Naive thymus-derived CD8-positive, alpha-beta T cell (primary cell): ENCODE measurements at regions of chr20 and their contacts with region 1.

Region 1: GRCh38 chr20:36645998-36646397 is at the start of gene SLA2:
- DNase-seq: peak; percentile 47 to 79 (median 70)
- ATAC-seq: peak; percentile 80 to 88
- H3K4me3 Mint-ChIP-seq: peak within 1 kb of the TSS; percentile 96 to 99 (median 98)
- H3K27ac Mint-ChIP-seq: peak within 1 kb of the TSS; percentile 90 to 99 (median 98)
- H3K4me1 Mint-ChIP-seq: peaks cover 31 to 60% (median 52%) of the 10 kb centered on the region in 4 donors
- H3K27me3 Mint-ChIP-seq: no peaks in the 10 kb centered on the region
- polyA plus RNA-seq, gene SLA2: 18.9 to 22.2 (median 19.1) TPM

Region 2: DNA sequence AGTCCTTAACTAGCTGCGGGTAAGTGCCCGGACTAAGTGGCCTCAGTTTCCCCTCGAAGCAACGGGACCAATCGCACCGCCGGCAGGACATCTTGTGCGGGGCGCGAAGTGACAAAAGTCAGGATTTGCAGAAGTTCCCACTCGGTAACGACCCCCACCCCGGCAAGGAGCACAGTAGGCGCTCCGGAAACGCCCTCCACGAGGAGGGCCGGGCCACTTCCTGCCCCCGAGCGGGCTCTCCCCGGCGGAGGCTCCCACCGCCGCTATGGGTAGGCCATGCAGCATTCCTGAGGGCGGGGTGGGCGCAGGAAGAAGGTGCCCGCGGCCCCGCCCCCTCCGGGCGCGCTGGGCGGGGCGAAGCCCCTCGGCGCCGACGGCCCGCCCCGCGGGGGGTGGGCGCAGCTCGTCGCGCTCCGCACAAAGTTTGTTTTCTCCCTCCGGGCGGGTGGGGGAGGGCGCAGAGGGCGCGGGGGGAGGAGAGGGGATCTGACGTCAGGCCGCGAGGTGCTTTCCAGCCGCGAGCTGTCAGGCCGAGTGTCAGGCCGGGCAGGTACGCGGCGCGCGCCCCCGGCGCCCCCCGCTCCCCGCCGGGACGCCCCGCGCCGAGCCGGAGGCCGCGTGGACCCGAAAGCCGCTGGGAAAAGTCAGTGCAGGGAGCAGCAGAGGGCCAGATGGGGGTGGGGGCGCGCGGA is 72.7 kb before region 1 on chr20 and contains the start of gene TGIF2:
- POLR2A ChIA-PET with region 1: interaction called, 19 read pairs
- DNase-seq: peak; percentile 86 to 96 (median 95)
- ATAC-seq: peak; percentile 71 to 75
- H3K4me3 Mint-ChIP-seq: peak within 1 kb of the TSS; percentile 85 to 98 (median 95)
- H3K27ac Mint-ChIP-seq: peak within 1 kb of the TSS; percentile 98 to 100 (median 99)
- H3K4me1 Mint-ChIP-seq: peaks cover 25 to 54% (median 39%) of the 10 kb centered on the region in 4 donors
- H3K27me3 Mint-ChIP-seq: no peaks in the 10 kb centered on the region
- polyA plus RNA-seq, gene TGIF2: 25.7 to 36.8 (median 30.8) TPM

Region 3: DNA sequence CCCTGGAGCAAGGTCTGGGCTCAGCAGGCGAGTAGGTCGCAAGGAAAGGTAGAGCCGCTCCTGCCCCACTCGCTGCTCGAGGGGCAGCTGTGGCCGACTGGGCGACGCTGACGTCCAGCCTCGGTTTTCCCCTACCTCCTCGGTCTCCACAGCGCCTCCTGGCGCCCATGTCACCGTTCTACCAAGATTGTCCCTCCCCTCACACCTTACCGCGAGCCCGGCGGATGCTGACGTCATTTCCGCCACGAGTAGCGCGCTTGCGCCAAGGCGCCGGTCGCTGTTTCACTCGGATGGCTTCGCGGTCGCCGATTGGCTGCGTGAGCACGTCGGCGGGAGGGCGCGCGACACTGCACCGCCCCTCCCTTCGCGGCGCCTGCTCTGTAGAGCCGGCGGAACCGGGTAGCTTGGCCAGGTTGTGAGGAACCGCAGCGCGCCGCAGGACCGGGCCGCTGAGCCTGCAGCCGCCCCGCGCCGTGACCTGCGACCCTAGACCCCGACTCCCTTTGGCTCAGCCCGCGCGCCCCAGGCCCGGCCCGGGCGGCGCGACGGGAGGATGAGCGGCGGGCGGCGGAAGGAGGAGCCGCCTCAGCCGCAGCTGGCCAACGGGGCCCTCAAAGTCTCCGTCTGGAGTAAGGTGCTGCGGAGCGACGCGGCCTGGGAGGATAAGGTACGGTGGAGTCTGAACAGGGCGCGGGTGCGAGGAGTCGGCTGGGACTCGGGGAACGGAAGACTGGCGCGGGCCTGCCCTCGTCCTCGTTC is 40.4 kb before region 1 on chr20 and contains the start of gene RAB5IF:
- POLR2A ChIA-PET with region 1: interaction called, 65 read pairs
- DNase-seq: peak; percentile 97 to 99 (median 99)
- ATAC-seq: peak; percentile 90 to 92
- H3K4me3 Mint-ChIP-seq: peak within 1 kb of the TSS; percentile 92 to 98 (median 96)
- H3K27ac Mint-ChIP-seq: peak within 1 kb of the TSS; percentile 92 to 99 (median 96)
- H3K4me1 Mint-ChIP-seq: peaks cover 15 to 45% (median 26%) of the 10 kb centered on the region in 4 donors
- H3K27me3 Mint-ChIP-seq: no peaks in the 10 kb centered on the region
- polyA plus RNA-seq, gene RAB5IF: 113 to 141 (median 138) TPM

Region 4: DNA sequence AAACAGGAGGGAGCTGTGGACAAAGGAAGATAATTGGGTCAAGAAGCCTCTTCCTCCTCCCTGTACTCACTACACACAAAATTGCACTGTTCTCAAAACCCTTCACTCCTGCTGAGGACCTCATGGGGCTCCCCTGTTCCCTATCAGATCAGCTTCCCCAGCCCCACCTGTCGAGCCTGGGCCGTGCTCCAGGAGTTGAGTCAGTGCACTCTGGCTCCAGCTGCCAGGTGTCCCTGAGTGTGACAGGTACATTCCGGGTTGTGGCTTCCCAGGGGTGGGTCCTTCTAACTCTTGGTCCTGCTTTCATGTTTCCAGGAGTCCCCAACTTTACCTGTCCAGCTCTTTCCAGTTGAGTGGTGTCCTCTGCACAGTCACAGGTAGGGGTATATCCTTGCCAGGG is 32.0 kb before region 1 on chr20:
- POLR2A ChIA-PET with region 1: interaction called, 65 read pairs
- DNase-seq: no peak
- ATAC-seq: no peak
- H3K4me3 Mint-ChIP-seq: peak overlapping the region in 1 of 10 donors; percentile 45
- H3K27ac Mint-ChIP-seq: peak overlapping the region in 9 of 10 donors; percentile 9 to 81 (median 52)
- H3K4me1 Mint-ChIP-seq: peaks cover 11 to 33% (median 14%) of the 10 kb centered on the region in 4 donors
- H3K27me3 Mint-ChIP-seq: no peaks in the 10 kb centered on the region

Region 5: GRCh38 chr20:36629719-36630681 is 16.0 kb before region 1 on chr20:
- POLR2A ChIA-PET with region 1: interaction called, 108 read pairs
- DNase-seq: peak in 9 of 10 donors; percentile 14 to 57 (median 40)
- ATAC-seq: peak; percentile 94 to 96
- H3K4me3 Mint-ChIP-seq: peak overlapping the region; percentile 60 to 91 (median 86)
- H3K27ac Mint-ChIP-seq: peak overlapping the region; percentile 93 to 99 (median 97)
- H3K4me1 Mint-ChIP-seq: peaks cover 25 to 71% (median 63%) of the 10 kb centered on the region in 4 donors
- H3K27me3 Mint-ChIP-seq: no peaks in the 10 kb centered on the region

Region 6: DNA sequence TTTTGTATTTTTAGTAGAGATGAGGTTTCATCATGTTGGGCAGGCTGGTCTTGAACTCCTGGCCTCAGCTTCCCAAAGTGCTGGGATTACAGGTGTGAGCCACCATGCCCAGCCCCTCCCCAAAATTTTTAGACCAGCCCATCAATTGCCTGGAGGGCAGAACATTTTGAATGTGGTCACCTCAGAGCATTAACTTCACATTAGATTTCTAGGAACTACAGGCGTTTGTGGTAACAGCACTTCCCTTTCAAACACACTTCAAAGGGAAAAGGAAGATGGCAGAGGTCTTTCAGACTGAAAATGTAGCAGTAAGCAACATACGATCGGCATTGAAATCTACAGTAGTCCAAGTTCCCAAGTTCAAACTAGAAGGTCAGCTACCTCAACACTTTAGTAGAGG is 12.3 kb after region 1 on chr20:
- POLR2A ChIA-PET with region 1: interaction called, 20 read pairs
- DNase-seq: peak in 4 of 10 donors; percentile 19 to 55 (median 44)
- ATAC-seq: peak; percentile 83 to 86
- H3K4me3 Mint-ChIP-seq: peak overlapping the region; percentile 40 to 77 (median 70)
- H3K27ac Mint-ChIP-seq: peak overlapping the region in 8 of 10 donors; percentile 10 to 89 (median 66)
- H3K4me1 Mint-ChIP-seq: peaks cover 5 to 32% (median 19%) of the 10 kb centered on the region in 4 donors
- H3K27me3 Mint-ChIP-seq: no peaks in the 10 kb centered on the region

Region 7: DNA sequence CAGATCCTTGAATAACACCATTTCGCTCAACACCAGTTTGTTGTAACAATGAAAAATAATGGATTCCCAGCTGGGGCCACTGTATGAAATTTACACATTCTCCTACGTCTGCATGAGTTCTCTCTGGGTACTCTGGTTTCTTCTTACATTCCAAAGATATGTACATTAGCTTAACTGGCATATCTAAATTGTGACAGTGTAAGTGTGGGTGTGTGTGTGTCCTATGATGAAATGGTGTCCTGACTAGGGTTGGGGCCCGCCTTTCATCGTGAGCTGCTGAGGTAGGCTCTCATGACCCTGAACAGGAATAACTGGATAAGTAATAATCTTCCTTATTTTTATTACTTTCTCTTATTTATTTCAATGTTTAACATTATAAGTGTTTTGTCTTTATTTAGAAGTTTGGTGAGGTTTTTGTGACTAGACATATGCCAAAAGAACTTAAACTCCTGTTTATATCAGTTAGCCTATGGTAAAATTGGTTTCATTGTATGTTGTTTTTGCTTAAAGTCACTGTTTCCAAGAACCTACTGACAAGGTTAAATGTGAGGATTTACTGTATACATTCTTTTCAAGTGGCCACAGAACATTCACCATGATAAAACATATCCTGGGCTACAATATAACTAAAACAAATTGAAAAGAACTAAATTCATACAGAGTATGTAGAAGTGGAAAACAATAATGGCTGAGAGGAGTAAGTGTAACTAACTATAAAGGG is 407.4 kb after region 1 on chr20:
- POLR2A ChIA-PET with region 1: no interaction called
- DNase-seq: no peak
- ATAC-seq: no peak
- H3K4me3 Mint-ChIP-seq: no peak overlapping the region
- H3K27ac Mint-ChIP-seq: peak overlapping the region in 7 of 10 donors; percentile 7 to 70 (median 34)
- H3K4me1 Mint-ChIP-seq: no peaks in the 10 kb centered on the region
- H3K27me3 Mint-ChIP-seq: no peaks in the 10 kb centered on the region